Endothelial cell of umbilical vein (primary cell): ENCODE measurements at regions of chr16 and their contacts with region 1.

Region 1: GRCh38 chr16:30602616-30603277 is 7.4 kb downstream of the ZNF689 start:
- DNase-seq: no peak
- H3K4me3 ChIP-seq: no peak overlapping the region
- H3K27ac ChIP-seq: no peak overlapping the region
- H3K4me1 ChIP-seq: no peaks in the 10 kb centered on the region
- H3K27me3 ChIP-seq: no peaks in the 10 kb centered on the region
- CTCF ChIP-seq: no peak
- POLR2A ChIP-seq: no peak

Region 2: GRCh38 chr16:30407102-30407803 is 195.5 kb before region 1 on chr16 and contains the start of gene ZNF771:
- CTCF ChIA-PET with region 1: interaction called, 10 read pairs
- POLR2A ChIA-PET with region 1: no interaction called
- dilution Hi-C with region 1: no loop called
- intact Hi-C with region 1: no loop called
- DNase-seq: peak; percentile 88
- H3K4me3 ChIP-seq: peak within 1 kb of the TSS; percentile 29 to 56 (median 47)
- H3K27ac ChIP-seq: peak within 1 kb of the TSS; percentile 71
- H3K4me1 ChIP-seq: peaks cover 22% of the 10 kb centered on the region
- H3K27me3 ChIP-seq: no peaks in the 10 kb centered on the region
- CTCF ChIP-seq: no peak
- POLR2A ChIP-seq: peak; percentile 92
- total RNA-seq, gene ZNF771: 10.3 and 11.7 TPM in 2 replicates

Region 3: DNA sequence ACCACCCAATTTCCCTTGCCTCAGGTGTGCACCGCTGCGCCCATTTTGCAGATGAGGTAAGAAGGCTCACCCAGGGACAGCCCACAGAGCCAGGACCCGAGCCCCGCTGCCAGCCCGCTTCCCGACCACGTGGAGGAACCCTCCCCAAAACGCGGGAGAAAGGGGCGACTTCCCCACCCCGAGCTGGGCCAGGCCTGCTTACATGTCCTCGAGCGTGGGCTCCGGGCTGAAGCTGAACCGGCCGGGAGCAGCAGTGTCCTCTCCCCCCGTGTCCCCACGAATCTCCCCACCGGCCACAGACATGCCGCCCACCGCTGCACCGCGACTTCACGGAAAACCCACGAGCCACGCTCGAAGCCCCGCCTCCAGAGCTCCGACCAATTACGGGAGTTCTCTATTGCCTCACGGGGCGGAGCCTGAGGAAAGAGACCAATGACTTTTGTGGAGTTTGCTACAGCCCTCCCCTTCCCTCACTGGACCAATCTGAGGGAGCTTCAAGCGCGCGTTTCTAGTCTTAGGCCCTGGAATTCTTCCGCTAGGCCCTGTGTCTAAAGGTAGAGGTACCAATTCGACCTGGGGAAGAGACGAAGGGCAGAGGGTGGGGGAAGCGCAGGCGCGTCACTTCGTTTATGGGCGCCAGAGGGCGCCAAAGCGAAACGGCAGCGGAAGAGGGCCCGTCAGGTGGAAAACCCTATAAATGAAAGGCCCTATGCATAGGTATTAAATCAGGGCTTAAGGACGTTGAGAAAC is 172.9 kb before region 1 on chr16 and contains the start of gene DCTPP1:
- CTCF ChIA-PET with region 1: interaction called, 40 read pairs
- POLR2A ChIA-PET with region 1: no interaction called
- dilution Hi-C with region 1: no loop called
- intact Hi-C with region 1: loop called (anchors 1 kb)
- DNase-seq: peak; percentile 97
- H3K4me3 ChIP-seq: peak within 1 kb of the TSS; percentile 40 to 73 (median 63)
- H3K27ac ChIP-seq: peak within 1 kb of the TSS; percentile 38
- H3K4me1 ChIP-seq: peaks cover 23% of the 10 kb centered on the region
- H3K27me3 ChIP-seq: peaks cover 0 to 4% of the 10 kb centered on the region in 2 experiments
- CTCF ChIP-seq: peak; percentile 66 to 78
- POLR2A ChIP-seq: peak; percentile 25
- total RNA-seq, gene DCTPP1: 65.2 and 68.0 TPM in 2 replicates

Region 4: GRCh38 chr16:30526823-30527635 is 75.7 kb before region 1 on chr16:
- CTCF ChIA-PET with region 1: interaction called, 6 read pairs
- POLR2A ChIA-PET with region 1: no interaction called
- dilution Hi-C with region 1: no loop called
- intact Hi-C with region 1: loop called (anchors 1 kb)
- DNase-seq: peak; percentile 98
- H3K4me3 ChIP-seq: peak overlapping the region; percentile 58 to 67 (median 65)
- H3K27ac ChIP-seq: peak overlapping the region; percentile 80
- H3K4me1 ChIP-seq: peaks cover 4% of the 10 kb centered on the region
- H3K27me3 ChIP-seq: no peaks in the 10 kb centered on the region
- CTCF ChIP-seq: peak; percentile 13 to 56
- POLR2A ChIP-seq: peak; percentile 58

Region 5: DNA sequence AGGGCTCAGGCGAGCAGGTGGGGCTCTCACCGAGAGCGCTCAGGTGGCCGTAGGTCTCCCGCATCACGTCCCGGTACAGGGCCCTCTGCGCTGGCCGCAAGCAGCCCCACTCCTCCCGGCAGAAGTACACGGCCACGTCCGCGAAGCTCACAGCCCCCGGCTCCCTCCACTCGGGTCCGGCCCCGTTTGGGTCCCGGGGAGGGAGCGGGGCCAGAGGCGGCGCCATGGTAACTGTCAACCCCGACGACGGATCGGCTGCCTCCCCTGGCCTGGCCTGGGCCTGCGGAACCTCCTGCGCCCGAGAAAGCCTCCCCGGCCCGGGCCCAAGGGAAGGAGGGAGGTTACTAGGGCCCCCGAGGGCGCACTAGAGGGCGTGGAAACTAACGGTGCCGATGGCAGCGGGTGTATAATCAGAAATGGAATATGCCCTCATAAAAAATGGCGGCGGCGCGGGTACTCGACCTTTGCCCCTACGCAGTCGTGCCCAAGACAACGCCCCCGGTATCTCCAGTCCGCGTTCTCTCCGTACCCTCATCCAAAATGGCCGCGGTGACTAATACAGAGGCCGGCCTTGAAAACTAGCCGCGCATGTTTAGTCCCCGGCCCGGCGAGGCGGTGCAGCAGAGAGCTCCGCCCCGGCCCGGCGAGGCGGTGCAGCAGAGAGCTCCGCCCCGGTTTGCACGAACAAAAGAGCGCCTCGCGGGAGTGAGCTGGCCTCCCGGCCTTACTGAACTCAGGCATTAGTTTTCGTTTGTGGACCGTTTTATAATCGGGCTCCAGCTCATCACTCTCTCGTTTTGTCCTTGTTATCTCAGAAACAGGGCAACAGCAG is 44.6 kb before region 1 on chr16 and contains the start of gene ZNF764:
- CTCF ChIA-PET with region 1: interaction called, 19 read pairs
- POLR2A ChIA-PET with region 1: no interaction called
- dilution Hi-C with region 1: no loop called
- intact Hi-C with region 1: no loop called
- DNase-seq: peak; percentile 98
- H3K4me3 ChIP-seq: peak within 1 kb of the TSS; percentile 67 to 89 (median 75)
- H3K27ac ChIP-seq: peak within 1 kb of the TSS; percentile 83
- H3K4me1 ChIP-seq: peaks cover 12% of the 10 kb centered on the region
- H3K27me3 ChIP-seq: no peaks in the 10 kb centered on the region
- CTCF ChIP-seq: no peak
- POLR2A ChIP-seq: peak; percentile 93
- total RNA-seq, gene ZNF764: 10.7 and 12.1 TPM in 2 replicates

Region 6: GRCh38 chr16:30585400-30586189 is 17.2 kb before region 1 on chr16 and contains the start of gene ZNF785:
- CTCF ChIA-PET with region 1: interaction called, 20 read pairs
- POLR2A ChIA-PET with region 1: no interaction called
- dilution Hi-C with region 1: no loop called
- intact Hi-C with region 1: loop called (anchors 1 kb)
- DNase-seq: peak; percentile 99
- H3K4me3 ChIP-seq: peak within 1 kb of the TSS; percentile 56 to 77 (median 72)
- H3K27ac ChIP-seq: peak within 1 kb of the TSS; percentile 49
- H3K4me1 ChIP-seq: peaks cover 7% of the 10 kb centered on the region
- H3K27me3 ChIP-seq: no peaks in the 10 kb centered on the region
- CTCF ChIP-seq: no peak
- POLR2A ChIP-seq: peak; percentile 55
- total RNA-seq, gene ZNF785: 17.6 and 21.9 TPM in 2 replicates

Region 7: DNA sequence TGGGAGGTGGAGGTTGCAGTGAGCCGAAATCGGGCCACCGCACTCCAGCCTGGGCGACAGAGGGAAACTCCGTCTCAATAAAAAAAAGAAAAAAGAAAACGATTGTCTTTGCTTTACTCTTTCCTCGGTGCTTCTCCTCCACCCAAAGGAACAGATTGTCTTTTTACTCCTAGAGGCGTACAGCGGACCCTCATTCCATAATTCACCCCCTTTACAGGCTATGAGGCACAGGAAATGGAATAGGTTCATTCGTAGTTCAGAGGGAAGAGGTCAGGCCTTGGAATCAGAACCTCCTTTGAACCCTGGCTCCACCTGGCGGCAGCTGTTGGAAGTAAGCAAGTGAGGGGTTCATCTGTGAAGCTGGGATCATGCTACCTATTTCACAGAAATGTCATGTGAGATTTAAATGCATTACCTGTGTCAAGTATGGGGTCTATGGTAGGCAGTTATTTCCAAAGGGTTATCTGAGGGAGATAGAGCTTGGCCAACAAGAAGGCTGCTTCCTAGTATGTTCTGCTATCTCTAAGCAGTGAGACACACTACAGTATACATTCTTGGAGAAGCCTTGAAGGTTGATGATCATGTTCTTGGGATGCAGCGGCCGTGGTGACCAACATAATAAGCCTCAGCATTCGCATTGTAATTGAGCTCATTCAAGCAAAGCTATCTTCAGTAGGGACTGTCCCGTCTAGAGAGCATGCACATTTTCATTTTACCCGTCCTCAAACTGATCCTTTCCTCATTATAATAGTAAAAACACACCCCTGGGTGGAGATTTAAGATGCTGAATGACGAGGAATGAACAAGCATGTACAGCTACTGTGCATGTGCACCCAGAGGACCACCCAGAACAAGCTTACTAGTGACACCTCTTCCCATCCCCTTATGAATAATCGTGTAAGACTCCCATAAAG is 26.1 kb after region 1 on chr16:
- CTCF ChIA-PET with region 1: interaction called, 16 read pairs
- POLR2A ChIA-PET with region 1: no interaction called
- dilution Hi-C with region 1: no loop called
- intact Hi-C with region 1: no loop called
- DNase-seq: peak; percentile 77
- H3K4me3 ChIP-seq: peak overlapping the region in 1 of 3 experiments; percentile 27
- H3K27ac ChIP-seq: no peak overlapping the region
- H3K4me1 ChIP-seq: peaks cover 3% of the 10 kb centered on the region
- H3K27me3 ChIP-seq: peaks cover 2% of the 10 kb centered on the region in 2 experiments
- CTCF ChIP-seq: peak; percentile 85 to 91
- POLR2A ChIP-seq: no peak